ENCODE measurements at regions of chr16 and their contacts with region 1.

Region 1: DNA sequence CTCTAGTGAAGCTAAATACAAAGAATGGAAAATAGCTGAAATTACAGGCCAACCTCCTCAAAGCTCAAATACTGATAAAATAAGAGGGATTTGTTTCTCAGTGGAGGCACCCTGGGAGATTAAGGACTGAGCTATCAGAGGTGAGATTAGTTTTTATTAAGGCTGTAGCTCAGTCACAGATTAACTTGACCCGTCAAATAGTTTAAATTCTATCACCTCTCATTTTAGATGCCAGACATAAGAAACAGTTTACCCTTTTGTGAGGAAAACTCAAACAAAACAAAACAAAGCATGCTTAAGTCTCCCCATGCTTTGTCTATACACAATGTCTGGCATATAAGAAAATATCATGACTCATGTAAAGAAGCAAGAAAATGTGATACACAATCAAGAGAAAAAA is 208.3 kb upstream of the PMFBP1 start:
- DNase-seq: peak in 1 of 2 experiments; percentile 30
- H3K4me3 ChIP-seq: no peak overlapping the region
- H3K4me3 Mint-ChIP-seq: peak overlapping the region; percentile 1
- H3K27ac Mint-ChIP-seq: peak overlapping the region; percentile 78
- H3K4me1 ChIP-seq: peaks cover 28% of the 10 kb centered on the region
- H3K4me1 Mint-ChIP-seq: peaks cover 29% of the 10 kb centered on the region
- H3K27me3 ChIP-seq: no peaks in the 10 kb centered on the region
- H3K27me3 Mint-ChIP-seq: no peaks in the 10 kb centered on the region
- CTCF ChIP-seq: no peak

Region 2: GRCh38 chr16:71515026-71515425 is 865.3 kb before region 1 on chr16:
- CTCF ChIA-PET with region 1: no interaction called
- POLR2A ChIA-PET with region 1: no interaction called
- intact Hi-C with region 1: no loop called
- DNase-seq: no peak
- H3K4me3 ChIP-seq: no peak overlapping the region
- H3K4me3 Mint-ChIP-seq: no peak overlapping the region
- H3K27ac Mint-ChIP-seq: no peak overlapping the region
- H3K4me1 ChIP-seq: no peaks in the 10 kb centered on the region
- H3K4me1 Mint-ChIP-seq: no peaks in the 10 kb centered on the region
- H3K27me3 ChIP-seq: no peaks in the 10 kb centered on the region; the same call in 1 of the 2 replicates
- H3K27me3 Mint-ChIP-seq: peaks cover 7% of the 10 kb centered on the region
- CTCF ChIP-seq: no peak

Region 3: GRCh38 chr16:72400257-72400882 is 20.1 kb after region 1 on chr16:
- CTCF ChIA-PET with region 1: interaction called, 11 read pairs
- POLR2A ChIA-PET with region 1: no interaction called
- intact Hi-C with region 1: no loop called
- DNase-seq: peak; percentile 49 to 65
- H3K4me3 ChIP-seq: no peak overlapping the region
- H3K4me3 Mint-ChIP-seq: no peak overlapping the region
- H3K27ac Mint-ChIP-seq: no peak overlapping the region
- H3K4me1 ChIP-seq: no peaks in the 10 kb centered on the region
- H3K4me1 Mint-ChIP-seq: no peaks in the 10 kb centered on the region
- H3K27me3 ChIP-seq: no peaks in the 10 kb centered on the region
- H3K27me3 Mint-ChIP-seq: no peaks in the 10 kb centered on the region
- CTCF ChIP-seq: peak; percentile 82 to 83

Region 4: DNA sequence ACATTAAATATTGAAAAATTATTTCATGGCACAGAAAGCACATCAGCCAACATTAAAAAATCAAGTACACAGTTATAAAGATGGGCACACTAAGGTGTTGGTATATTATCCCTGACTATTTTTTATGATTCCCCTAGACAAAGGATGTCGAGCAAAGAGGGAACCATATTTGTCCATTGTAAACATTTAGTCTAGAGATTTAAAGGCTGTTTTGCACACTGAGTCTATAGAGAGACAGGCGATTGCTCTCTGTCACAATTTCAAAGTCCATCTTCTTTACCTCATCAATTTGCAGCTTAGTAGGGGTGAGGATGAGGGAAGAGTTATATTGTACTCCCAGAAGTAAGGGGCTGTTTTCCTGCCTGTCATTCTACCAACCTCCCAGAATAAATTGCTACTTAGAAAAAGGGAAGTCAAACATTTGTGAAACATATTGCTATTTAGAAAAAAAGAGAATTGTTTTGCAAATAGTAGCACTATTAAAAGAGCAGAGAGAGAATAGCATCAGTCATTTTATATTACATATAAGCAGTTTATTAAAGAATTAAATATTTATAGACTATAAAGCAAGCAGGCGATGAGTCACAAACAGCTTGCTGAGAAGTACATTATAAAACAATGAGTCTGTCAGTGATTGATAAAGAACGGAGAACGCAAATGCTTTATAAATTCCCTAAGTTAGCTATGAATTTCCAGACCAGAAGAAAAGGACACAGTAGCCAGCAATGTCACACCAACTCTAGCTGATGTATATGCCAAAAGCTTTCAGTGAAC is 62.3 kb after region 1 on chr16:
- CTCF ChIA-PET with region 1: no interaction called
- POLR2A ChIA-PET with region 1: no interaction called
- intact Hi-C with region 1: loop called (anchors 2 kb)
- DNase-seq: no peak
- H3K4me3 ChIP-seq: no peak overlapping the region
- H3K4me3 Mint-ChIP-seq: no peak overlapping the region
- H3K27ac Mint-ChIP-seq: no peak overlapping the region
- H3K4me1 ChIP-seq: no peaks in the 10 kb centered on the region
- H3K4me1 Mint-ChIP-seq: no peaks in the 10 kb centered on the region
- H3K27me3 ChIP-seq: no peaks in the 10 kb centered on the region
- H3K27me3 Mint-ChIP-seq: no peaks in the 10 kb centered on the region
- CTCF ChIP-seq: no peak

Region 5: DNA sequence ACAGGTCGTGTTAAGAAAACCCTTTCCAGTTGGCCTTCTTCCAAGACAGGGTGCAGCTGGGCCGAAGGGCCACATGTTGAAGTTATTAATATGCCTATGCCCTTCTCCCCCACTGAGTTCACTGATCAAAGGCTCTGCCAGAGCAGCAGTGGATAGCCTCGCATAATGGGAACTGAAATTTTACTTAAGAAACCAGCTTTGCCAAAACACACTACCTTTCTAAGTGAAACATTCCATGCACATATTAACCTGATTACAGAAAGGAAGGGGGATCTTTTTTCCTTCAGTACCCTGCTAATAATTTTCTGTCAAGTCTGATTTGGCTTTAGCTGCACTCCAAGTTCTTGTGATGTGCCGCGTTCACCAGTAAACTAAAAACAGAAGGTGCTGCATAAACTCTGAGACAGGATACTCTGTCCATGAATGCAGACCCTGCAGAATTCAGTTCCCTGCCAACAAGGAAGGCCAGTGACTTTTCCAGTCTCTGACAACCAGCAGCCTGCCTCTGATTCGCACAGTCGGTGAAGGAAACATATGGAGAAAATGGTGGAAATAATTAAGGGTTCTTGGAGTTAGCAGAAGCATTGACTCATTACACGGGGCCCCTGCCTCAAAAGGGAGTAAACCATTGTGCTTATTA is 383.9 kb after region 1 on chr16:
- CTCF ChIA-PET with region 1: no interaction called
- POLR2A ChIA-PET with region 1: no interaction called
- intact Hi-C with region 1: no loop called
- DNase-seq: no peak
- H3K4me3 ChIP-seq: no peak overlapping the region
- H3K4me3 Mint-ChIP-seq: no peak overlapping the region
- H3K27ac Mint-ChIP-seq: no peak overlapping the region
- H3K4me1 ChIP-seq: no peaks in the 10 kb centered on the region
- H3K4me1 Mint-ChIP-seq: no peaks in the 10 kb centered on the region
- H3K27me3 ChIP-seq: no peaks in the 10 kb centered on the region
- H3K27me3 Mint-ChIP-seq: no peaks in the 10 kb centered on the region
- CTCF ChIP-seq: no peak

Measured in Caco-2 (cell line).